ENCODE measurements at regions of chr1 and their contacts with region 1.

Region 1: DNA sequence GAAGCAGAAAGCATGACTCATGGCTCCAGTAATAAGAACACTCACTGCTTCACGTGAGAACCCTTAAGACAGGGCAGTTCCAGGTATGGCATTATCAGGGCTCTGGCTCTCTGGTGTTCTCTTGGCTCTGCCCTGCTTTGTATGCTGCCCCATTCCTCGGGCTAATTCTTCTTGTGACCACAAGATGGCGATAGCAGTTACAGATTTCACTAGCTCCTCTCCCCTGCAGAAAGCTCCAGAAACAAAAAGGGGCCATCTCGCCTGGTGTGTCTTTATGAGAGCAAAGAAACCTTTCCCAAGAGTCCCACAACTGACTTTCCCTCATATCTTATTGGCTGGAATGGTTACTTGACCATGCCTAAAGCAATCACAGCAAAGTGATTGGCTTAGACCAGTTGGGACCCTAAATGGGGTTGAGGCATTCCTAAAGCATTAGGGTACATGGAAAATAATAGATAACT is 60.1 kb downstream of the F3 start:
- H3K4me3 ChIP-seq: no peak overlapping the region
- H3K27ac ChIP-seq: no peak overlapping the region
- H3K4me1 ChIP-seq: no peaks in the 10 kb centered on the region
- CTCF ChIP-seq: no peak

Region 2: DNA sequence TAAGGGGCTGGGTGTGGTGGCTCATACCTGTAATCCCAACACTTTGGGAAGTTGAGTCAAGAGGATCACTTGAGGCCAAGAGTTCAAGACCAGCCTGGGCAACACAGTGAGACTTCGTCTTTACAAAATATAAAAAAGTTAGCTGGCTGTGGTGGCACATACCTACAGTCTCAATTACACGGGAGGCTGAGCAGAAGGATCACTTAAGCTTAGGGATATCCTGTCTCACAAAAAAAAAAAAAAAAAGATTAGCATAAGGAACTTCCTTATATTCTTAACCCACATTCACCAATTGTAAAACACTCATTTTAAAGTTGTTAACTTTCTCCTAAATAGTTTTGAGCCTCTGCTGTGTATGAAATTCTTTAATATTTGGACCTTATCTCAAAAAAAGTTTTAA is 10.2 kb before region 1 on chr1:
- CTCF ChIA-PET with region 1: interaction called, 35 read pairs
- POLR2A ChIA-PET with region 1: no interaction called
- H3K4me3 ChIP-seq: no peak overlapping the region
- H3K27ac ChIP-seq: no peak overlapping the region
- H3K4me1 ChIP-seq: no peaks in the 10 kb centered on the region
- CTCF ChIP-seq: no peak

Region 3: DNA sequence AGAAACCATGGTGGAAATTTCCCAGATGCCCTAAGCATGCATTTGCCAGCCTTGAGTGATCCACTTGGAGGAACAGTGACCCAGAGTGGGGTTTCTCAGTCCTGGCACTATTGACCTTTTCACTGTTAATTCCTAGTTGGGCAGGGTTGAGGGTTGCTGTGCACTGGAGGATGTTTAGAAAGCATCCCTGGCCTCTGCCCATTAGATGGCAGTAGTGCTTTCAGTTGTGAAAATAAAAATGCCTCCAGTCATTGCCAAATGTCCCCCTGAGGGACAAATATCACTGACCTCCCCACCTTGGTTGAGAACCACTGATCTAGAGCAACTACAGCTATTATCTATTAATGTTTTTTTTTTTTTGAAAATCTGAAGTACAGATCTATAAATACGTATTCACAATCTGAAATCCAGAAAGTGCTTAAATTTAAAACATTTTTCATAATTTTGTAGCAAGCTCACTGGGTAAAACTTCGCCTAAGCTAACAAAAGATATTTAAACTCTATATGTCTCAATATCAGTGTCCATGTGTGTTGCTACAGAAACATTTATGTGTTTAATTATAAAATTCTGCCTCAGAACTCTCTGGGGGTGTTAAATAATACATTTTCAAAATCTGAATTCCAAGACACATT is 32.7 kb after region 1 on chr1:
- CTCF ChIA-PET with region 1: interaction called, 10 read pairs
- POLR2A ChIA-PET with region 1: no interaction called
- H3K4me3 ChIP-seq: no peak overlapping the region
- H3K27ac ChIP-seq: no peak overlapping the region
- H3K4me1 ChIP-seq: no peaks in the 10 kb centered on the region
- CTCF ChIP-seq: no peak